ENCODE measurements at regions of chr6 and their contacts with region 1.

Region 1: GRCh38 chr6:167221400-167222201 is 63.8 kb upstream of the GPR31 start:
- DNase-seq: no peak
- ATAC-seq: no peak
- H3K4me3 ChIP-seq: no peak overlapping the region
- H3K27ac ChIP-seq: peak overlapping the region; percentile 82
- H3K4me1 ChIP-seq: peaks cover 95% of the 10 kb centered on the region
- H3K27me3 ChIP-seq: no peaks in the 10 kb centered on the region
- CTCF ChIP-seq: no peak
- EP300 ChIP-seq: no peak
- POLR2A ChIP-seq: no peak
- RAD21 ChIP-seq: no peak

Region 2: GRCh38 chr6:167238146-167238693 is 16.6 kb after region 1 on chr6:
- CTCF ChIA-PET with region 1: no interaction called
- POLR2A ChIA-PET with region 1: interaction called, 18 read pairs
- in situ Hi-C with region 1: no loop called
- intact Hi-C with region 1: loop called (anchors 2 kb)
- DNase-seq: peak; percentile 58
- ATAC-seq: peak; percentile 46
- H3K4me3 ChIP-seq: peak overlapping the region; percentile 16 to 53 (median 22); a peak in 5 of 6 replicates
- H3K27ac ChIP-seq: peak overlapping the region; percentile 67
- H3K4me1 ChIP-seq: peaks cover 78% of the 10 kb centered on the region
- H3K27me3 ChIP-seq: no peaks in the 10 kb centered on the region
- CTCF ChIP-seq: 0 out of 2 replicates have a peak, but pooled peaks have one; percentile 8
- EP300 ChIP-seq: no peak
- POLR2A ChIP-seq: peak; percentile 40 to 52; a peak in 2 of 4 replicates
- RAD21 ChIP-seq: no peak

Region 3: GRCh38 chr6:167285077-167285770 is 63.6 kb after region 1 on chr6:
- CTCF ChIA-PET with region 1: interaction called, 19 read pairs
- POLR2A ChIA-PET with region 1: interaction called, 22 read pairs
- in situ Hi-C with region 1: loop called (anchors 5 kb)
- intact Hi-C with region 1: loop called (anchors 1 kb)
- DNase-seq: no peak
- ATAC-seq: no peak
- H3K4me3 ChIP-seq: no peak overlapping the region
- H3K27ac ChIP-seq: no peak overlapping the region
- H3K4me1 ChIP-seq: peaks cover 92% of the 10 kb centered on the region
- H3K27me3 ChIP-seq: no peaks in the 10 kb centered on the region
- CTCF ChIP-seq: no peak
- EP300 ChIP-seq: no peak
- POLR2A ChIP-seq: no peak
- RAD21 ChIP-seq: no peak

Region 4: DNA sequence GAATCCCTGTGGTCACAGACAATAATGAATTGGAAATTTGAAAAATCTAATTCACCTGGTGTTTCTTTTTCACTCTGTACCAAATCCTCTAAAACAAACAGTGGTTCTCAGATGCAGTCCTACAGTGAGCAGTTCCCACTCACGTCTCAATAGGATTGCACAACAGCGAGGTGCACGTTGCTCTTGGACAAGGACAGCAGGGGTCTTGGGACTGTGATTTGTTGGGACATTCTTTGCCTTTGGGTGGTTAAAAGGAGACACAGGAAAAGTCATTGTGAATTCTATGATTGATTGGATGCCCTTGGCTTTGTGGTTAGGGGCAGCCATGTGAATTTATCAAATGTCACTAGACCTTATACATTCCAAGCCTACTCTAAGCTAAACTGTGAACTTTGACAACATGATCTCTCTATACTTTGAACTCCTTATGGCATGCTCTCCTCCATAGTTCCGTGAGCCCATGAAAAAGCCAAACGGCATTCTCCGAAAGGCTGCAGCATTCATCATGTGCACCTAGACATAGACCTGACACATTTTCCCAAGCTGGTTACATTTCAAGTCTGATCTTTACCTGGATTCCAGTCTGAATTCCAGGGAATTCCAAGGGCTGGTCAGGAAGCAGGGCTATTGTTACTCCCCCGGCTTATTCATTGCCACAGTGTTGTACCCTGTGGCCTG is 70.2 kb after region 1 on chr6:
- CTCF ChIA-PET with region 1: interaction called, 19 read pairs
- POLR2A ChIA-PET with region 1: interaction called, 22 read pairs
- in situ Hi-C with region 1: loop called (anchors 5 kb)
- intact Hi-C with region 1: loop called (anchors 1 kb)
- DNase-seq: peak; percentile 77
- ATAC-seq: peak; percentile 48
- H3K4me3 ChIP-seq: peak overlapping the region; percentile 38 to 53 (median 38); a peak in 4 of 6 replicates
- H3K27ac ChIP-seq: peak overlapping the region; percentile 77
- H3K4me1 ChIP-seq: peaks cover 75% of the 10 kb centered on the region
- H3K27me3 ChIP-seq: no peaks in the 10 kb centered on the region
- CTCF ChIP-seq: peak; percentile 34; the same call in 1 of the 2 replicates
- EP300 ChIP-seq: peak in 1 of 2 experiments; percentile 63; a peak in 1 of 4 replicates
- POLR2A ChIP-seq: no peak; a peak in 1 of 4 replicates
- RAD21 ChIP-seq: peak; percentile 15

Region 5: DNA sequence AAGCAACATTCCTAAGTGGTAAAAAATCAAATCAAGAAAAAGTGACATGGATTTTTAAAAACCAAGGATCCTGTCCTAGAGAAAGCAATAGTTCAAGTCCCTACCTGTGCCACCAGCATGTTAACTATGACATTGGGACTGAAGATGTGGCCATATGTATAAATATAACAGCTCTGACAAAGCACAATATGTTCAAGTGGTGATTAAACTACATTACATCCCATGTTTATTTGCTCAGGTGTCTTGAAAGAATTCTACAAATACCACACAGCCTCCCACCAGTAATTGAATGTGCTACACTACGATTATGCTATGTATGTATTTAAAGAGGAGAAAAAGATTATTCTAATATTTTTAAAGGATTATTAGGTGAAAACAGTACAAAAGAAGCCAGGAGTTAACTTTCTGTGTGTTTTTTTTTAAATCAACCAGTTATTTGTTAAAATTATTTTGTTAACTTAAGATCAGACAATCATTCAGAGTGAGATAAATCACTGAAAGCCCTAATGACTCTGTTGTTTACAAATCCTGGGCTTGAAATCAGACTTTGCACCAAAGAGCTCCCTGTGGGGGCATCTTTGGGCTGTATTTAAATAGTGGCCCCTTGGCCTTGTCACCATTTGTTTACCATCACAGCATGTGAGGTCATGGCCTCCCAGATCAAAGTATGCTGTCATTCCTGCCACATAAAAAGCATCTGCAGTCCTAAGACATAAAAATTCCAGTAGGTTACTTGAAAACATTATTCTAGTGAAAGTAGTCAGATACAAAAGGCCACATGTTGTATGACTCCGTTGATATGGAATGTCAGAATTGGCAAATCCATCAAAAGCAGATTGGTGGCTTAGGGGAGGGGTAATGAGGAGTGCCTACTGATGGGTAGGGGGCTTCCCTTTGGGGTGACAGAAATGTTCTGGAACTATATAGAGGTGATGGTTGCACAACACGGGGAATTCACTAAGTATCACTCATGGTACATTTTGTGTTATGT is 120.4 kb after region 1 on chr6:
- CTCF ChIA-PET with region 1: no interaction called
- POLR2A ChIA-PET with region 1: interaction called, 18 read pairs
- in situ Hi-C with region 1: no loop called
- intact Hi-C with region 1: no loop called
- DNase-seq: peak; percentile 100
- ATAC-seq: peak; percentile 91
- H3K4me3 ChIP-seq: peak overlapping the region in 1 of 3 experiments; percentile 14; a peak in 1 of 6 replicates
- H3K27ac ChIP-seq: peak overlapping the region; percentile 79
- H3K4me1 ChIP-seq: peaks cover 81% of the 10 kb centered on the region
- H3K27me3 ChIP-seq: no peaks in the 10 kb centered on the region
- CTCF ChIP-seq: 0 out of 2 replicates have a peak, but pooled peaks have one; percentile 20
- EP300 ChIP-seq: peak; percentile 99 to 100
- POLR2A ChIP-seq: 0 out of 4 replicates have a peak, but pooled peaks of 1 of the 2 experiments have one; percentile 24
- RAD21 ChIP-seq: peak; percentile 15; the same call in 1 of the 2 replicates

Measured in HepG2 (cell line).